ENCODE measurements at regions of chr17 and their contacts with region 1.

Region 1: GRCh38 chr17:43211480-43212402 is at the start of gene TMEM106A:
- DNase-seq: peak; percentile 72 to 88
- ATAC-seq: peak; percentile 91 to 93 (median 91)
- H3K4me3 ChIP-seq: peak within 1 kb of the TSS; percentile 72
- H3K4me3 Mint-ChIP-seq: peak within 1 kb of the TSS; percentile 96
- H3K27ac ChIP-seq: peak within 1 kb of the TSS; percentile 86
- H3K27ac Mint-ChIP-seq: peak within 1 kb of the TSS; percentile 95 to 97
- H3K4me1 ChIP-seq: peaks cover 21% of the 10 kb centered on the region
- H3K4me1 Mint-ChIP-seq: peaks cover 22 to 34% of the 10 kb centered on the region in 2 donors
- H3K27me3 ChIP-seq: no peaks in the 10 kb centered on the region
- H3K27me3 Mint-ChIP-seq: no peaks in the 10 kb centered on the region
- CTCF ChIP-seq: peak; percentile 52
- total RNA-seq, gene TMEM106A: 22.0 to 27.4 (median 22.4) TPM

Region 2: DNA sequence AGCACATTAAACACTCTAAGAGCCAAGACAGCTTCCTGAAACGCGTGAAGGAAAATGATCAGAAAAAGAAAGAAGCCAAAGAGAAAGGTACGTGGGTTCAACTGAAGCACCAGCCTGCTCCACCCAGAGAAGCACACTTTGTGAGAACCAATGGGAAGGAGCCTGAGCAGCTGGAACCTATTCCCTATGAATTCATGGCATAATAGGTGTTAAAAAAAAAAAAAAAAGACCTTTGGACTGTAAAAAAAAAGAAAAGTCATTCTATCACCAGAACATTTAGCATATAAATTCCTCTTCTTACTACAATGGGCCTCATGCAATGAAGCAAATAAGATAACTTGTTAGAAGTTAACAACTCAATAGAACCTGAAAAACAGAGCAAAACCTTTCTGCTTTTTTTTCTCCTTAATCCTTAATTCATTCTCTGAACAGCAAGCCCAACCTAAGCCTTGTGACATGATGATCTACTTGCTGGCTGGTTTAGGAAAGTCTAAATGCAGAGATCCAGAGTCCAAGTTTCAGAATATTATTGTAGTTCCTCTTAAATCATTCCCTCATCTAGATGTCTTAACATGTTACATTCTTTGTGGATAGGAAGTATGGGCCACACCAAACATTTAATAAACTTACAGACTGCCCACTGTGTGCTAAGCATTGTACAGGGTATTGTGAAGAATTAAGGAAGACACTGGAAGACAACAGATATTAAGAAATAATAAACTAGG is 132.0 kb before region 1 on chr17:
- intact Hi-C with region 1: no loop called
- DNase-seq: no peak
- ATAC-seq: no peak
- H3K4me3 ChIP-seq: no peak overlapping the region
- H3K4me3 Mint-ChIP-seq: no peak overlapping the region
- H3K27ac ChIP-seq: no peak overlapping the region
- H3K27ac Mint-ChIP-seq: no peak overlapping the region
- H3K4me1 ChIP-seq: no peaks in the 10 kb centered on the region
- H3K4me1 Mint-ChIP-seq: no peaks in the 10 kb centered on the region
- H3K27me3 ChIP-seq: no peaks in the 10 kb centered on the region
- H3K27me3 Mint-ChIP-seq: no peaks in the 10 kb centered on the region
- CTCF ChIP-seq: no peak

Region 3: DNA sequence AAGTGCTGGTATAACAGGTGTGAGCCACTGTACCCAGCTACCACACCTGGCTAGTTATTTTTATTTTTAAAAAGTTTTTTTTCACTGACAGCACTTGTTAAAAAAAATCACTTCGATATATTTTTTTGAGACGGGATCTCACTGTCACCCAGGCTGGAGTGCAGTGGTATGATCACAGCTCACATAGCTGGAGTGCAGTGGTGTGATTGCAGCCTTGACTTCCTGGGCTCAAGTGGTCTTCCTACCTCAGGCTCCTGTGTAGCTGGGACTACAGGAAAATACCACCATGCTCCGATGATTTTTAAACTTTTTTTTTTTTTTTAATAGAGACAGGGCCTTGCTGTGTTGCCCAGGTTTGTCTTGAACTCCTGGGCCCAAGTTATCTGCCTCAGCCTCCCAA is 27.8 kb before region 1 on chr17:
- intact Hi-C with region 1: no loop called
- DNase-seq: no peak
- ATAC-seq: no peak
- H3K4me3 ChIP-seq: no peak overlapping the region
- H3K4me3 Mint-ChIP-seq: no peak overlapping the region
- H3K27ac ChIP-seq: no peak overlapping the region
- H3K27ac Mint-ChIP-seq: no peak overlapping the region
- H3K4me1 ChIP-seq: no peaks in the 10 kb centered on the region
- H3K4me1 Mint-ChIP-seq: no peaks in the 10 kb centered on the region
- H3K27me3 ChIP-seq: no peaks in the 10 kb centered on the region
- H3K27me3 Mint-ChIP-seq: no peaks in the 10 kb centered on the region
- CTCF ChIP-seq: no peak

Region 4: DNA sequence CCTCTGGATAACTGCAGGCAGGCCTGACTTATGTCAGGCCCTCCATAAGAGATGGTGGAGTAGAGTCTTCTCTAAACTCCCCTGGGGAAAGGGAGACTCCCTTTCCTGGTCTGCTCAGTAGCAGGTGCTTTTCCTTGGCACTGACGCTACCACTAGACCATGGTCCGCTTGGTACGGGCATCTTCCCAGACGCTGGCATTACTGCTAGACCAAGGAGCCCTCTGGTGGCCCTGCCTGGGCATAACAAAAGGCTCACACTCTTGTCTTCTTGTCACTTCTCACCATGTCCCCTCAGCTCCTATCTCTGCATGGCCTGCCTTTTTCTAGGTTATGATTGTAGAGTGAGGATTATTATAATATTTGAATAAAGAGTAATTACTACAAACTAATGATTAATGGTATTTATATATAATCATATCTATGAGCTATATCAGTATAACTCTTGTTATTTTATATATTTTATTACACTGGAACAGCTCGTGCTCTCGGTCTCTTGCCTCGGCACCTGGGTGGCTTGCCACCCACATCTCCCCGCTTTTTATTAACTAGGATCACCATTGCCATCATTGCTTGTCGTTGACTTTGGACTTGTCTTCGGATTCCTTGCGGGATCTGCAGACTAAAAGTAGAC is 127.3 kb after region 1 on chr17:
- intact Hi-C with region 1: loop called (anchors 5 kb)
- DNase-seq: peak; percentile 56 to 72
- ATAC-seq: peak in 2 of 3 donors; percentile 43 to 49
- H3K4me3 ChIP-seq: no peak overlapping the region
- H3K4me3 Mint-ChIP-seq: no peak overlapping the region
- H3K27ac ChIP-seq: no peak overlapping the region
- H3K27ac Mint-ChIP-seq: peak overlapping the region in 1 of 2 donors; percentile 63
- H3K4me1 ChIP-seq: peaks cover 6% of the 10 kb centered on the region
- H3K4me1 Mint-ChIP-seq: peaks cover 14% of the 10 kb centered on the region in 2 donors
- H3K27me3 ChIP-seq: no peaks in the 10 kb centered on the region
- H3K27me3 Mint-ChIP-seq: peaks cover 7 to 8% of the 10 kb centered on the region in 2 donors
- CTCF ChIP-seq: peak; percentile 62

Measured in natural killer cell (primary cell).